Activated CD4-positive, alpha-beta T cell treated with anti-CD3 and anti-CD28 coated beads for 36 hours (primary cell): ENCODE measurements at regions of chr11 and their contacts with region 1.

Region 1: GRCh38 chr11:17077520-17078401 is at the start of gene RPS13:
- DNase-seq: peak; percentile 97
- ATAC-seq: peak; percentile 97
- H3K4me3 Mint-ChIP-seq: peak within 1 kb of the TSS; percentile 100
- H3K27ac Mint-ChIP-seq: peak within 1 kb of the TSS; percentile 98
- H3K4me1 Mint-ChIP-seq: peaks cover 30% of the 10 kb centered on the region
- H3K27me3 Mint-ChIP-seq: no peaks in the 10 kb centered on the region
- total RNA-seq, gene RPS13: 1,242 to 1,685 TPM

Region 2: DNA sequence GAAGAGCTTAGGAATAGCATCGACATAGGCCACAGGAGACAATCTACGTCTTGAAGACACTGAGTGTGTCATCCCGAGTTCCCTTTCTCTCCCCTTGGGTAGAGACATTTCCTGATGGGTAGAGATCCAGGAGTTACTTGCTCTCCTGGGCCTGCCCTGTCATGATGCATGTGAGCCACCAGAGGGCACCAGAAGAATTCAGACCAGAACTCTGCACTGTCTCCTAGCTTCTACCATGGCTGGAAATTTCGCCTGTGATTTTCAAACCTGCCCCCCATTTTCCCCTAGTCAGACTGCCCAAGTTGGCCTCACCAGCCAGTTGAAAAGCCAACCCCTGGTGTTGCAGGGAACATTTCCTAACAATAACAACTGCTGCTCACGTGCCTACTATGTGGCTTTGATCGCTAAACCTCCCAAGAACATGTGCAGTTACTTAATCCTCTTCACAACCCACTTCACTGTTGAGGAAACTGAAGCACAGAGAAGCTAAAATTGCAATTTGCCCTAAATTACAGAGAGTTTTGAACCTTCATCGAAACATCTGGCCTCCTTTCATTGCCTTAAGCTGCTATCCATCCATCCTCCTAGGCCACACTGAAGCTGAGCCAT is 292.1 kb before region 1 on chr11:
- CTCF ChIA-PET with region 1: interaction called, 10 read pairs
- POLR2A ChIA-PET with region 1: no interaction called
- intact Hi-C with region 1: no loop called
- DNase-seq: peak; percentile 77
- ATAC-seq: peak; percentile 80
- H3K4me3 Mint-ChIP-seq: no peak overlapping the region
- H3K27ac Mint-ChIP-seq: no peak overlapping the region
- H3K4me1 Mint-ChIP-seq: no peaks in the 10 kb centered on the region
- H3K27me3 Mint-ChIP-seq: no peaks in the 10 kb centered on the region

Region 3: GRCh38 chr11:16935518-16936302 is 142.1 kb before region 1 on chr11:
- CTCF ChIA-PET with region 1: interaction called, 3 read pairs
- POLR2A ChIA-PET with region 1: no interaction called
- intact Hi-C with region 1: loop called in 1 of 2 experiments (anchors 5 kb)
- DNase-seq: peak; percentile 61
- ATAC-seq: peak; percentile 86
- H3K4me3 Mint-ChIP-seq: no peak overlapping the region
- H3K27ac Mint-ChIP-seq: no peak overlapping the region
- H3K4me1 Mint-ChIP-seq: no peaks in the 10 kb centered on the region
- H3K27me3 Mint-ChIP-seq: peaks cover 7% of the 10 kb centered on the region

Region 4: GRCh38 chr11:17244046-17244445 is 166.3 kb after region 1 on chr11:
- CTCF ChIA-PET with region 1: no interaction called
- POLR2A ChIA-PET with region 1: no interaction called
- intact Hi-C with region 1: no loop called
- DNase-seq: no peak
- ATAC-seq: peak; percentile 64
- H3K4me3 Mint-ChIP-seq: no peak overlapping the region
- H3K27ac Mint-ChIP-seq: no peak overlapping the region
- H3K4me1 Mint-ChIP-seq: peaks cover 4% of the 10 kb centered on the region
- H3K27me3 Mint-ChIP-seq: peaks cover 21% of the 10 kb centered on the region

Region 5: GRCh38 chr11:17276236-17277023 is 198.7 kb after region 1 on chr11 and contains the start of gene NUCB2:
- CTCF ChIA-PET with region 1: no interaction called
- POLR2A ChIA-PET with region 1: interaction called, 6 read pairs
- intact Hi-C with region 1: loop called in 1 of 2 experiments (anchors 1 kb)
- DNase-seq: peak; percentile 99
- ATAC-seq: peak; percentile 92
- H3K4me3 Mint-ChIP-seq: peak within 1 kb of the TSS; percentile 75
- H3K27ac Mint-ChIP-seq: peak within 1 kb of the TSS; percentile 96
- H3K4me1 Mint-ChIP-seq: peaks cover 36% of the 10 kb centered on the region
- H3K27me3 Mint-ChIP-seq: no peaks in the 10 kb centered on the region
- total RNA-seq, gene NUCB2: 45.0 to 59.9 TPM

Region 6: GRCh38 chr11:17389211-17389956 is 311.6 kb after region 1 on chr11:
- CTCF ChIA-PET with region 1: interaction called, 3 read pairs
- POLR2A ChIA-PET with region 1: no interaction called
- intact Hi-C with region 1: loop called in 1 of 2 experiments (anchors 1 kb)
- DNase-seq: peak; percentile 86
- ATAC-seq: peak; percentile 82
- H3K4me3 Mint-ChIP-seq: peak overlapping the region; percentile 66
- H3K27ac Mint-ChIP-seq: no peak overlapping the region
- H3K4me1 Mint-ChIP-seq: peaks cover 3% of the 10 kb centered on the region
- H3K27me3 Mint-ChIP-seq: peaks cover 8% of the 10 kb centered on the region

Region 7: GRCh38 chr11:18321980-18322711 is 1244.4 kb after region 1 on chr11 and contains the starts of genes GTF2H1 and HPS5:
- CTCF ChIA-PET with region 1: no interaction called
- POLR2A ChIA-PET with region 1: no interaction called
- intact Hi-C with region 1: loop called in 1 of 2 experiments (anchors 5 kb)
- DNase-seq: peak; percentile 97
- ATAC-seq: peak; percentile 89
- H3K4me3 Mint-ChIP-seq: peak within 1 kb of the TSS; percentile 92
- H3K27ac Mint-ChIP-seq: peak within 1 kb of the TSS; percentile 100
- H3K4me1 Mint-ChIP-seq: peaks cover 59% of the 10 kb centered on the region
- H3K27me3 Mint-ChIP-seq: no peaks in the 10 kb centered on the region
- total RNA-seq, gene GTF2H1: 48.2 to 57.9 TPM
- total RNA-seq, gene HPS5: 14.3 to 16.1 TPM